ENCODE measurements at regions of chr12 and their contacts with region 1.

Region 1: DNA sequence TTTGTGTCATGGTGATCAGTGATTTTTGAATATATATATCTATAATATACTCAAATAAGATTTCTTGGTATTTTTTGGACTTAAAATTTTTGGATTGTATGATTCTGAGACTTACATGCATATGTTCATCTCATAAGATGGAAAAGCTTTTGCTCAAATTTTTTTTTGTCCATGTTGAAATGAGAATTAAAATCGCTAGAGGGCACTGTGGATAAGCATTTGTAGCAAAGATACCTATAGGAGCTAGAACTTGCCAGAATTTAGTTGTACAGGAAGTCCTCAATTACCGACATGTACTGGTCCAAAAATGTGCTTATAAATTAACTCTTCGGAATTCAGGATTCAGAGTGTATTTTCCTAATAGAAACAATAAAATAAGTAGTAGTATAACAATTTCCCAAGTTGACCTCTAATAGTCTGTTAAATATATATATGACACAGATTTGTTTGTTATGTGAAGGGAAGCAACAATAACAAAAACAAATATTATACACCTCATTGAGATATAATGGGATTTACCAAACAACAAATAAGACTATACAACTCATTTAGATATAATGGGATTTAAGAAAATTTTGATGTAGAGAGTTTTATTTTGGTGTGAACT is 179.6 kb downstream of the TMEM117 start:
- DNase-seq: peak; percentile 59

Region 2: DNA sequence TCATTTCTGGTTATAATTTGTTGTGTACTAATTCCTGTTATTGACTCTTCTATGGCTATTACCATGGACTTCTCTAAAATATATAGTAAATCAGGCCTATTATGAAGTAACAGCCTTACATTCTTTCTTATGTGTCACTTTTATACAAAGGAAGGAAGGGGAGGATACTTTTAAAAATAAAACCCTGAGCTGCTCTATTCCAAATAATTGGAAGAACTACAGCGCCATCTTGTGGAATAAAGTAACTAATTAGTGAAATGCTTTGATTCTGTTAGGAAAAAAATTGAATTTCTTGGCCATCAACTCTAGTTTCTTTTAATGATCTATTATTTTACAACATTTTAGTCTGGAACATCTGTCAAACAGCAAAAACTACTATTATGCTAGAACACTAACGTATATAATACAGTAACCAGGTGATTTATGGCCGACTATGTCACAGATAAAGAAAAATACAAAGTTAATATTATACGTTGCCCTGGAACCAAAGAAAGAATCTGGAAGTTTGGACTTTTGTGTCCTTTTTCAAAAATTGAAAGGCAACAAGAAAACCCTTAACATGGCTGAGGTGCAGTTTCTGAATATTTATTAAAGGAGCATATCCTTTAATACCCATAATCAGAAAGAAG is 915.6 kb after region 1 on chr12:
- in situ Hi-C with region 1: loop called (anchors 25 kb)
- DNase-seq: peak; percentile 63

Measured in KBM-7 (cell line).